Panc1 (cell line): ENCODE measurements at regions of chr5 and their contacts with region 1.

Region 1: GRCh38 chr5:73519531-73520283 is 21.5 kb downstream of the BTF3 start:
- DNase-seq: peak; percentile 82
- ATAC-seq: peak; percentile 99
- H3K4me3 ChIP-seq: no peak overlapping the region
- H3K27ac ChIP-seq: no peak overlapping the region
- H3K4me1 ChIP-seq: no peaks in the 10 kb centered on the region
- H3K27me3 ChIP-seq: no peaks in the 10 kb centered on the region
- CTCF ChIP-seq: peak; percentile 90

Region 2: GRCh38 chr5:73482383-73483136 is 37.1 kb before region 1 on chr5:
- CTCF ChIA-PET with region 1: no interaction called
- POLR2A ChIA-PET with region 1: no interaction called
- in situ Hi-C with region 1: no loop called
- intact Hi-C with region 1: loop called (anchors 2 kb)
- DNase-seq: no peak
- ATAC-seq: no peak
- H3K4me3 ChIP-seq: no peak overlapping the region
- H3K27ac ChIP-seq: no peak overlapping the region
- H3K4me1 ChIP-seq: no peaks in the 10 kb centered on the region
- H3K27me3 ChIP-seq: no peaks in the 10 kb centered on the region
- CTCF ChIP-seq: no peak

Region 3: GRCh38 chr5:73540192-73540591 is 20.5 kb after region 1 on chr5:
- CTCF ChIA-PET with region 1: interaction called, 13 read pairs
- POLR2A ChIA-PET with region 1: no interaction called
- in situ Hi-C with region 1: no loop called
- intact Hi-C with region 1: loop called (anchors 2 kb)
- DNase-seq: no peak
- ATAC-seq: peak; percentile 73
- H3K4me3 ChIP-seq: no peak overlapping the region
- H3K27ac ChIP-seq: no peak overlapping the region
- H3K4me1 ChIP-seq: peaks cover 10% of the 10 kb centered on the region
- H3K27me3 ChIP-seq: no peaks in the 10 kb centered on the region
- CTCF ChIP-seq: no peak

Region 4: GRCh38 chr5:73938280-73938937 is 418.7 kb after region 1 on chr5:
- CTCF ChIA-PET with region 1: no interaction called
- POLR2A ChIA-PET with region 1: no interaction called
- in situ Hi-C with region 1: no loop called
- intact Hi-C with region 1: no loop called
- DNase-seq: peak; percentile 33
- ATAC-seq: peak; percentile 82
- H3K4me3 ChIP-seq: no peak overlapping the region
- H3K27ac ChIP-seq: no peak overlapping the region
- H3K4me1 ChIP-seq: no peaks in the 10 kb centered on the region
- H3K27me3 ChIP-seq: no peaks in the 10 kb centered on the region
- CTCF ChIP-seq: no peak